WTC11 (cell line): ENCODE measurements at regions of chr16 and their contacts with region 1.

Region 1: GRCh38 chr16:52912565-52913173 is 140.0 kb downstream of the CHD9NB start:
- DNase-seq: peak; percentile 83
- ATAC-seq: peak; percentile 93
- H3K4me3 Mint-ChIP-seq: no peak overlapping the region
- H3K27ac Mint-ChIP-seq: no peak overlapping the region
- H3K4me1 Mint-ChIP-seq: peaks cover 6% of the 10 kb centered on the region
- H3K27me3 Mint-ChIP-seq: no peaks in the 10 kb centered on the region
- CTCF ChIP-seq: peak; percentile 65

Region 2: DNA sequence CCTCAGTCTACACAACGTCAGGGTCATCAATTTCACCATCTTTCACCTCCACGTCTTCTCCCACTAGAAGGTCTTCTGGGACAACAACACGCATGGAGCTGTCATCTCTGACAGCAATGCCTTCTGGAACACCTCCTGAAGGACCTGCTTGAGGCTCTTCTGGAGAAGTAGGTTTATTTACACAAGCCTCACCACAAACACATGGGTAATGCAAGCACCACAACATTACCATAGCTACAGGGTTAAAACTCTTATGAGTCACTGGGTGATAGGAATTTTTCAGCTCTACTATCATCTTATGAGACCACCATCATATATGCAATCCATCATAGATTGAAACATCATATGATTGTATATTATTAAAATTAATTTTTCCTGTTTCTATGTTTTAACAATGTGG is 75.4 kb before region 1 on chr16:
- CTCF ChIA-PET with region 1: no interaction called
- POLR2A ChIA-PET with region 1: no interaction called
- DNase-seq: no peak
- ATAC-seq: no peak
- H3K4me3 Mint-ChIP-seq: no peak overlapping the region
- H3K27ac Mint-ChIP-seq: no peak overlapping the region
- H3K4me1 Mint-ChIP-seq: no peaks in the 10 kb centered on the region
- H3K27me3 Mint-ChIP-seq: no peaks in the 10 kb centered on the region
- CTCF ChIP-seq: no peak

Region 3: GRCh38 chr16:52861614-52862022 is 51.1 kb before region 1 on chr16:
- CTCF ChIA-PET with region 1: interaction called, 16 read pairs
- POLR2A ChIA-PET with region 1: no interaction called
- DNase-seq: peak; percentile 17
- ATAC-seq: no peak; the same call in 1 of the 2 replicates
- H3K4me3 Mint-ChIP-seq: no peak overlapping the region
- H3K27ac Mint-ChIP-seq: no peak overlapping the region
- H3K4me1 Mint-ChIP-seq: peaks cover 14% of the 10 kb centered on the region
- H3K27me3 Mint-ChIP-seq: no peaks in the 10 kb centered on the region; the same call in 1 of the 2 replicates
- CTCF ChIP-seq: 0 out of 2 replicates have a peak, but pooled peaks have one; percentile 34